A549 (cell line): ENCODE measurements at regions of chr1 and their contacts with region 1.

Region 1: GRCh38 chr1:32933742-32934322 is 30.8 kb downstream of the RNF19B start:
- DNase-seq: peak; percentile 38 to 84
- ATAC-seq: peak; percentile 71 to 77
- H3K4me3 ChIP-seq: no peak overlapping the region
- H3K27ac ChIP-seq: peak overlapping the region; percentile 77 to 86
- H3K4me1 ChIP-seq: peaks cover 37% of the 10 kb centered on the region
- CTCF ChIP-seq: peak; percentile 13; the same call in 1 of the 3 replicates
- EP300 ChIP-seq: no peak
- POLR2A ChIP-seq: no peak
- RAD21 ChIP-seq: no peak

Region 2: GRCh38 chr1:32919811-32920733 is 13.8 kb before region 1 on chr1:
- CTCF ChIA-PET with region 1: interaction called, 30 read pairs
- POLR2A ChIA-PET with region 1: no interaction called
- DNase-seq: no peak
- ATAC-seq: no peak
- H3K4me3 ChIP-seq: no peak overlapping the region
- H3K27ac ChIP-seq: peak overlapping the region in 1 of 2 experiments; percentile 18; a peak in 1 of 6 replicates
- H3K4me1 ChIP-seq: no peaks in the 10 kb centered on the region
- CTCF ChIP-seq: no peak
- EP300 ChIP-seq: no peak
- POLR2A ChIP-seq: no peak
- RAD21 ChIP-seq: no peak

Region 3: GRCh38 chr1:32964461-32965250 is 30.8 kb after region 1 on chr1 and contains the start of gene RNF19B:
- CTCF ChIA-PET with region 1: interaction called, 4 read pairs
- POLR2A ChIA-PET with region 1: interaction called, 17 read pairs
- DNase-seq: peak; percentile 90 to 94
- ATAC-seq: peak; percentile 90 to 98
- H3K4me3 ChIP-seq: peak within 1 kb of the TSS; percentile 91
- H3K27ac ChIP-seq: peak within 1 kb of the TSS; percentile 81 to 98
- H3K4me1 ChIP-seq: peaks cover 16% of the 10 kb centered on the region; the same call in 2 of the 3 replicates
- CTCF ChIP-seq: no peak
- EP300 ChIP-seq: no peak
- POLR2A ChIP-seq: peak; percentile 98
- RAD21 ChIP-seq: peak; percentile 2 to 27; a peak in 1 of 5 replicates
- polyA plus RNA-seq, gene RNF19B: 21.7 and 22.6 TPM in 2 replicates

Region 4: GRCh38 chr1:33007190-33008050 is 73.6 kb after region 1 on chr1:
- CTCF ChIA-PET with region 1: interaction called, 29 read pairs
- POLR2A ChIA-PET with region 1: interaction called, 4 read pairs
- DNase-seq: peak; percentile 79 to 84
- ATAC-seq: peak; percentile 98 to 99
- H3K4me3 ChIP-seq: no peak overlapping the region
- H3K27ac ChIP-seq: peak overlapping the region in 1 of 2 experiments; percentile 59; a peak in 1 of 6 replicates
- H3K4me1 ChIP-seq: peaks cover 19% of the 10 kb centered on the region
- CTCF ChIP-seq: peak; percentile 51
- EP300 ChIP-seq: no peak
- POLR2A ChIP-seq: no peak
- RAD21 ChIP-seq: peak; percentile 59 to 67

Region 5: GRCh38 chr1:33086384-33086850 is 152.6 kb after region 1 on chr1:
- CTCF ChIA-PET with region 1: interaction called, 18 read pairs
- POLR2A ChIA-PET with region 1: no interaction called
- DNase-seq: peak; percentile 33 to 83
- ATAC-seq: peak; percentile 86 to 95
- H3K4me3 ChIP-seq: no peak overlapping the region
- H3K27ac ChIP-seq: no peak overlapping the region
- H3K4me1 ChIP-seq: 0 out of 3 replicates have a peak, but pooled peaks cover 5% of the 10 kb centered on the region
- CTCF ChIP-seq: peak; percentile 72
- EP300 ChIP-seq: no peak
- POLR2A ChIP-seq: no peak
- RAD21 ChIP-seq: peak; percentile 83 to 86